PC-3 (cell line): ENCODE measurements at regions of chr1 and their contacts with region 1.

Region 1: GRCh38 chr1:113042285-113043143 is 30.5 kb upstream of the LRIG2 start:
- DNase-seq: peak; percentile 90
- ATAC-seq: peak; percentile 91
- H3K4me3 ChIP-seq: peak overlapping the region; percentile 12; the same call in 1 of the 2 replicates
- H3K27ac ChIP-seq: peak overlapping the region; percentile 66
- H3K4me1 ChIP-seq: peaks cover 27% of the 10 kb centered on the region
- H3K27me3 ChIP-seq: no peaks in the 10 kb centered on the region
- CTCF ChIP-seq: peak; percentile 84

Region 2: GRCh38 chr1:112809253-112809684 is 233.2 kb before region 1 on chr1:
- CTCF ChIA-PET with region 1: interaction called, 4 read pairs
- POLR2A ChIA-PET with region 1: no interaction called
- intact Hi-C with region 1: loop called (anchors 1 kb)
- DNase-seq: peak; percentile 86
- ATAC-seq: peak; percentile 92
- H3K4me3 ChIP-seq: no peak overlapping the region
- H3K27ac ChIP-seq: no peak overlapping the region
- H3K4me1 ChIP-seq: 0 out of 2 replicates have a peak, but pooled peaks cover 6% of the 10 kb centered on the region
- H3K27me3 ChIP-seq: no peaks in the 10 kb centered on the region
- CTCF ChIP-seq: peak; percentile 96

Region 3: GRCh38 chr1:112818990-112819689 is 223.4 kb before region 1 on chr1:
- CTCF ChIA-PET with region 1: interaction called, 12 read pairs
- POLR2A ChIA-PET with region 1: no interaction called
- intact Hi-C with region 1: no loop called
- DNase-seq: peak; percentile 13
- ATAC-seq: peak; percentile 57
- H3K4me3 ChIP-seq: no peak overlapping the region
- H3K27ac ChIP-seq: no peak overlapping the region
- H3K4me1 ChIP-seq: peaks cover 5% of the 10 kb centered on the region; the same call in 1 of the 2 replicates
- H3K27me3 ChIP-seq: no peaks in the 10 kb centered on the region
- CTCF ChIP-seq: no peak

Region 4: GRCh38 chr1:112882271-112882744 is 160.2 kb before region 1 on chr1:
- CTCF ChIA-PET with region 1: interaction called, 4 read pairs
- POLR2A ChIA-PET with region 1: interaction called, 6 read pairs
- intact Hi-C with region 1: loop called (anchors 1 kb)
- DNase-seq: no peak
- ATAC-seq: no peak
- H3K4me3 ChIP-seq: no peak overlapping the region
- H3K27ac ChIP-seq: no peak overlapping the region
- H3K4me1 ChIP-seq: peaks cover 6% of the 10 kb centered on the region
- H3K27me3 ChIP-seq: no peaks in the 10 kb centered on the region
- CTCF ChIP-seq: no peak